ENCODE measurements at regions of chr7 and their contacts with region 1.

Region 1: GRCh38 chr7:149067876-149068275 is 22.6 kb downstream of the ZNF786 start:
- DNase-seq: no peak
- ATAC-seq: no peak

Region 2: GRCh38 chr7:149005241-149006050 is 62.4 kb before region 1 on chr7:
- intact Hi-C with region 1: loop called (anchors 2 to 10 kb)
- DNase-seq: peak; percentile 93
- ATAC-seq: peak; percentile 81 to 91

Region 3: GRCh38 chr7:149028346-149029109 is 39.3 kb before region 1 on chr7 and contains the start of gene PDIA4:
- intact Hi-C with region 1: loop called in 1 of 2 experiments (anchors 5 kb)
- DNase-seq: peak; percentile 99
- ATAC-seq: peak; percentile 96 to 98
- total RNA-seq, gene PDIA4: 56.2 to 95.3 TPM

Region 4: DNA sequence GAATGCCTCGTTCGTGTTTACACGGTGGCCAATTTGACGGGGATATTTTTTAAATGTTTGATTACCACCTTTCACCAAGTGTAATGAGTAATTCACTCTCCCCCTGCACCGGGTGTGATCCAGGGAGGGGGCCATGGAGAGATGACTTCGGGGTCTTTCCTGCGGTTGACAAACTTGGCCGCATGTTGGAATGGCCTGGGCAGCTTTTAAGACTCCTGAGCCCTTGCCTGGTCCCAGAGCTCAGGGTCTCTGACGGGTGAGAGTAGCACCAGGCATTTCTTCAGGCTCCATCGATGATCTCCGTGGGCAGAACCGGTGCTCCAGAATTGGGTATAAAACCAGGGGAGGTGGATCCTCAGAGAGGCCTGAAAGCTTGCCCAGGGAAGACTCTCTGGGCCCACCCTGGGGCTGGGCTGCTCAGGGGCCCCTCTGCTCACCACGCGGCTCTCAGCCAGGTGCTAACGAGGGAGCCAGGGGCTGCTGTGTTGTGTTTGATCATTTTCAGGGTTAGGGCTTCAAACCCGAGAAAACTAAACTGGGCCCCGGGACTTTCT is 128.4 kb after region 1 on chr7:
- intact Hi-C with region 1: no loop called
- DNase-seq: no peak
- ATAC-seq: peak in 1 of 2 donors; percentile 1

Region 5: DNA sequence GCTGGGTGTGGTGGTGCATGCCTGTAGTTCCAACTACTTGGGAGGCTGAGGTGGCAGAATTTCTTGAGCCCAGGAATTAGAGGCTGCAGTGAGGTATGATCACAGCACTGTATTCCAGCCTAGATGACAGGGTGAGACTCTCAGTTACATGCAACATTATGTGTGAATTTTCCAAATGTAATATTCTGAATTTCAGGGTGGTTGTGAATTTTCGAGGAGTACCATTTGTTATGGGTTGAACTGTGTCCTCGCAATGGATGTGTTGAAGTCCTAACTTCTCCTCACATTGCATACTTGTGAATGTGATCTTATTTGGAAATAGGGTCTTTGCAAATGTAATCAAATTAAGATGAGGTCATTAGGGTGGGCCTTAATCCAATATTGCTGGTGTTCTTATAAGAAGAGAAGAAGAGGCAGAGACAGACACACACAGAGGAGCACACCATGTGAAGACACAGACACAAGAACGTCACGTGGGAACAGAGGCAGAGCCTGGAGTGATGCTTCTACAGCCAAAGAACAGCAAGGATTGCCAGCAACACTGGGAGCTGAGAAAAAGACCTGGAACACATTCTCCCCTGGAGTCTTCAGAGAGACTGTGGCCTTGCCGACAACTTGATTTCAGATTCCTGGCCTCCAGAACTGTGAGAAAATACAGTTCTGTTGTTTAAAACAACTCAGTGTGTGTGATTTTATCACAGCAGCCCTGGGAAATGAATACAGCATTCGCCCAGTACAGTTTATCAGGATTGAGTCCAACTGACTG is 286.0 kb after region 1 on chr7:
- intact Hi-C with region 1: no loop called
- DNase-seq: no peak
- ATAC-seq: no peak

Measured in left cardiac atrium (tissue), 4 donors.